ENCODE measurements at regions of chr6 and their contacts with region 1.

Region 1: GRCh38 chr6:6057424-6058053 is 50.8 kb upstream of the NRN1 start:
- DNase-seq: peak in 2 of 4 donors; percentile 22 to 60
- ATAC-seq: peak; percentile 89
- H3K4me3 ChIP-seq: no peak overlapping the region
- H3K27ac ChIP-seq: no peak overlapping the region
- H3K4me1 ChIP-seq: no peaks in the 10 kb centered on the region
- H3K27me3 ChIP-seq: peaks cover 0 to 26% of the 10 kb centered on the region in 2 donors
- CTCF ChIP-seq: peak; percentile 45 to 69

Region 2: GRCh38 chr6:6547110-6547879 is 489.8 kb after region 1 on chr6:
- intact Hi-C with region 1: loop called in 1 of 2 experiments (anchors 10 kb)
- DNase-seq: peak; percentile 83 to 92 (median 88)
- ATAC-seq: peak; percentile 99
- H3K4me3 ChIP-seq: peak overlapping the region; percentile 29 to 41
- H3K27ac ChIP-seq: no peak overlapping the region
- H3K4me1 ChIP-seq: peaks cover 7 to 15% of the 10 kb centered on the region in 2 donors
- H3K27me3 ChIP-seq: peaks cover 12 to 55% of the 10 kb centered on the region in 2 donors
- CTCF ChIP-seq: peak; percentile 89 to 99